Activated CD4-positive, alpha-beta T cell treated with anti-CD3 and anti-CD28 coated beads, Interleukin-2, amount 10 ng/mL, durations not matched to agents 24 days and 14 days (primary cell): ENCODE measurements at regions of chr11 and their contacts with region 1.

Region 1: DNA sequence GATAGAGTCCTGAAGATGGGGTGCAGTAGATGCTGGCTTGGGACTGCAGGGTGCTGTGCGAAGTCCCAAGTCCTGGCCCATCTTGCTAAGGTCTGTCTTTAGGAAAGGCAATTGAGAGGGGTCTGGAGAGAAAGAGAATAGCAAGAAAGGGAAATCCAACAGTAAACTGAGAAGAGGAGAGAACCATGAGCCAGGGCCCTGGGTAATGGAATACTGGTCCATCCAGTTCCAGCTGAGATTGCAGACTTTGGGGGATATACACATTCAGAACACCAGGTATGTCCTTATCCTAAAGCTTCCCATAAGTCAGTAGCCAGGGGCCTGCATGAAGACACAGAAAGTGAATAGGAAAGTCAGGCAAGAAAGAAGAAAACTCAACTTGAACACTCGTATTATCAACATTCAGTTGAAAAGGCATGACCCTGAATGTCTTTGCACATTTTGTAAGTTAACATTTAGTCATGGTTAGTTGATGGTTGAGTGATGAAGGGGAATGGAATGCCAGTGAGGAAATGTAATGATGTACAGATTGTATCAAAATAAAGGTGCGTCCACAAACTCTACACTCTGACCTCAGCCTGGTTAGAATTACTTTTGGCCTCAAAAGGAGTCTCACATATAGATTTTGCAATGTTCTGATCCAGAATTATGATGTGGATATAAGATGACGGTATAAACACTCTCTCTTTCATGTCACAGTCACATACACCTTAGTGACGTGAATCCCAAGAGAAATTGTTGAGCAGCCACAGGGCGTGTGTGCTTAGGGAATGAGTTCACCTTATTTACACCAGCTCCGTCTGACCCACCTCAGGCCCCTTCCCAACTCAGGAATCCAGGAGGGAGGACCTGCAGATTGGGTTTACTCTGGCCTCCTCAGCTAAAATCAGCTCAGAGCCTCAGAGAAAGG is 100.3 kb downstream of the RDX start:
- DNase-seq: no peak
- H3K4me3 Mint-ChIP-seq: no peak overlapping the region
- H3K27ac Mint-ChIP-seq: no peak overlapping the region
- H3K4me1 Mint-ChIP-seq: peaks cover 14% of the 10 kb centered on the region
- H3K27me3 Mint-ChIP-seq: peaks cover 28% of the 10 kb centered on the region

Region 2: GRCh38 chr11:109785714-109786113 is 410.4 kb before region 1 on chr11:
- intact Hi-C with region 1: no loop called
- DNase-seq: no peak
- H3K4me3 Mint-ChIP-seq: no peak overlapping the region
- H3K27ac Mint-ChIP-seq: no peak overlapping the region
- H3K4me1 Mint-ChIP-seq: no peaks in the 10 kb centered on the region
- H3K27me3 Mint-ChIP-seq: no peaks in the 10 kb centered on the region

Region 3: DNA sequence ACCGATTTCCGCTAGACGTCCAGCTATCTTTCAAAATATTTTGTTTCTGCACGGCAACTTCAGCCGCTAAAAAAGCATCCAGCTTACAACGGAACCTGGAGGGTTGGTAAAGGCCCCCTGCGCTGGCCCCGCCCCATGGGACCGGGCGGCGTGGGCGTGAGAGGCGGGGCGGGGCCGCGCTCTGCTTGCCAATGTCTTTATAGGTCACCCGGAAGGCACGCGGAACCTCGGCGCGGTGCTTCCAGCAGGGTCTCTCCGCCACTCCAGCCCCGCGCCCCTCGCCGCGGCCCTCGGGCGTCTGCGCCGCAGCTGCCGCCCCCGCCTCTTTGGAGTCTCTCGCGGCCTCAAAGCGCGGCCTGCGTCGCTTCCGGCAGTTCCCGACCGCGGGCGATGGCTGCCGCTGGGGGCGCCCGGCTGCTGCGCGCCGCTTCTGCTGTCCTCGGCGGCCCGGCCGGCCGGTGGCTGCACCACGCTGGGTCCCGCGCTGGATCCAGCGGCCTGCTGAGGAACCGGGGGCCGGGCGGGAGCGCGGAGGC is 233.7 kb after region 1 on chr11 and contains the start of gene FDX1:
- intact Hi-C with region 1: loop called (anchors 1 kb)
- DNase-seq: peak; percentile 95
- H3K4me3 Mint-ChIP-seq: peak within 1 kb of the TSS; percentile 99
- H3K27ac Mint-ChIP-seq: peak within 1 kb of the TSS; percentile 98
- H3K4me1 Mint-ChIP-seq: peaks cover 39% of the 10 kb centered on the region
- H3K27me3 Mint-ChIP-seq: no peaks in the 10 kb centered on the region
- total RNA-seq, gene FDX1: 14.2 and 16.4 TPM in 2 replicates

Region 4: GRCh38 chr11:111230122-111230465 is 1034.0 kb after region 1 on chr11:
- intact Hi-C with region 1: loop called (anchors 1 kb)
- DNase-seq: no peak
- H3K4me3 Mint-ChIP-seq: peak overlapping the region; percentile 68
- H3K27ac Mint-ChIP-seq: no peak overlapping the region
- H3K4me1 Mint-ChIP-seq: peaks cover 18% of the 10 kb centered on the region
- H3K27me3 Mint-ChIP-seq: peaks cover 26% of the 10 kb centered on the region

Region 5: DNA sequence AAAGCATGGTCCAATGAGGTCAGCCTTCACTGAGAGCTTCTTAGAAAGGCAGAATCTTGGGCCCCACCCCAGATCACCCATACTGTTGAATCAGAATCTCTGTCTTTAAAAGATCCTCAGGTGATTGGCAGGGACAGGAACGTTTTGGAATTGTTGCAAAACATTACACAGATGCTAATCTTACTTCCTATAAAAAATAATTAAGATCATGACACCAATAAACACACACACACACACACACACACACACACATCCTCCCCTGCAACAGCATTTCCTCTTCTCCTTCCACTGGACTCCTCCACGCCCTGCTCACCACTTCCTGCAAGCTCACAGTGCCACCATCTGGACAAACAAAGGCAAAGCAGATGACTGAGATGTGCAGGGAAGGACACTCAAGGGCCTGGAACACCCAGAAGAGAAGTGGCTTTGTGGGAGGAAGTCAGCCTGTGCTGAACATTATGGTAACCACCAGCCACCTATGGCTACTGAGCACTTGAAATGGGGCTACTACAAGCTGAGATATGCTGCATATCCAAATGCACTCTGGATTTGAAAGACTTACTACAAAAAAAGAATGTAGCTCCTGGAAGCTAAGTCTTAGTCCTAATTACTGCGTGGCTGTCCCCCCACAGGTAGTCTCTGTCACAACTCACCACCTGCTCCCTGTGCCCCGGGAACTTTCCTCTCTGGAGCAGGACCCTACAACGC is 1250.5 kb after region 1 on chr11:
- intact Hi-C with region 1: loop called (anchors 10 kb)
- DNase-seq: peak; percentile 94
- H3K4me3 Mint-ChIP-seq: no peak overlapping the region
- H3K27ac Mint-ChIP-seq: peak overlapping the region; percentile 4
- H3K4me1 Mint-ChIP-seq: peaks cover 14% of the 10 kb centered on the region
- H3K27me3 Mint-ChIP-seq: peaks cover 2% of the 10 kb centered on the region